Psoas muscle (tissue), 8 donors: ENCODE measurements at regions of chr11 and their contacts with region 1.

Region 1: GRCh38 chr11:75100314-75100713 is 3.6 kb upstream of the OR2AT4 start:
- DNase-seq: no peak
- ATAC-seq: no peak
- H3K4me3 ChIP-seq: no peak overlapping the region
- H3K27ac ChIP-seq: no peak overlapping the region
- H3K4me1 ChIP-seq: no peaks in the 10 kb centered on the region
- H3K27me3 ChIP-seq: peaks cover 0 to 12% (median 0%) of the 10 kb centered on the region in 3 donors
- CTCF ChIP-seq: no peak

Region 2: GRCh38 chr11:75055471-75055870 is 44.8 kb before region 1 on chr11:
- intact Hi-C with region 1: loop called in 1 of 2 experiments (anchors 10 kb)
- DNase-seq: no peak
- ATAC-seq: no peak
- H3K4me3 ChIP-seq: no peak overlapping the region
- H3K27ac ChIP-seq: no peak overlapping the region
- H3K4me1 ChIP-seq: no peaks in the 10 kb centered on the region
- H3K27me3 ChIP-seq: no peaks in the 10 kb centered on the region
- CTCF ChIP-seq: no peak

Region 3: GRCh38 chr11:75757651-75758050 is 657.3 kb after region 1 on chr11:
- intact Hi-C with region 1: no loop called
- DNase-seq: no peak
- ATAC-seq: no peak
- H3K4me3 ChIP-seq: no peak overlapping the region
- H3K27ac ChIP-seq: no peak overlapping the region
- H3K4me1 ChIP-seq: no peaks in the 10 kb centered on the region
- H3K27me3 ChIP-seq: no peaks in the 10 kb centered on the region
- CTCF ChIP-seq: no peak